ENCODE measurements at regions of chr2 and their contacts with region 1.

Region 1: GRCh38 chr2:31401580-31401979 is 13.0 kb downstream of the XDH start:
- DNase-seq: peak; percentile 98
- H3K4me3 ChIP-seq: no peak overlapping the region
- H3K27me3 ChIP-seq: no peaks in the 10 kb centered on the region
- CTCF ChIP-seq: no peak

Region 2: GRCh38 chr2:31413862-31414550 is 12.4 kb after region 1 on chr2:
- CTCF ChIA-PET with region 1: interaction called, 17 read pairs
- POLR2A ChIA-PET with region 1: no interaction called
- DNase-seq: no peak
- H3K4me3 ChIP-seq: no peak overlapping the region
- H3K27me3 ChIP-seq: no peaks in the 10 kb centered on the region
- CTCF ChIP-seq: no peak

Region 3: DNA sequence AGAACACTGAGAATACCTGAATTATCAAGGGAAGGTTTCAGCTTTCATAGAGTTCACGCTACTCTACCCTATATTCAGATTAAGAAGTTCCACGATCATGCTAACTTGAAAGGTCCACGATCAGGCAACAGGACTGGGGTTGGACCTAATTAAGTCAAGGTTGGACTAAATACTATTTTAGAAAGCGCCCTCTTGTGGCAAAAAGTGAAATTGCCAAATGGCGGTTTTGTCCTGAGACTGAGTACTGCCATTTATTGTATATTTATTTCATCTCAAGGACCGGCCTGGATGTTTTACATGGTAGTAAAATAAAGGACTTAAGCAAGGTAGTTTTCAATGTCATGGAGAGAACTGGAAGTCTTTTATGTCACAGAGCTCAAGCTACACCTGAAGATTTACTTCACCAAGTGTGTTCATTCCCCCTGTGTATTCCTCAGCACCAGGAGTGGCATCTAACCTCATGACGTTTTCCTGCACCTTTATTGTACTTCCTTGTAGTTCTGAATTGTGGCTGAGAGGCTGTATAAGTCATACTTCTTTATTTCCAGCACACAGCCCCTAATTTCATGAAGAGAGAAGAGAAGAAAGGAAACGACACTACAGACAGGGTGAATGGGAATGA is 122.4 kb after region 1 on chr2:
- CTCF ChIA-PET with region 1: interaction called, 11 read pairs
- POLR2A ChIA-PET with region 1: no interaction called
- DNase-seq: no peak
- H3K4me3 ChIP-seq: no peak overlapping the region
- H3K27me3 ChIP-seq: no peaks in the 10 kb centered on the region
- CTCF ChIP-seq: peak; percentile 71

Measured in BJ (cell line).